Calu3 (cell line): ENCODE measurements at regions of chr2 and their contacts with region 1.

Region 1: GRCh38 chr2:201182650-201183364 is at the start of gene CASP10:
- DNase-seq: peak; percentile 54
- H3K4me3 Mint-ChIP-seq: peak within 1 kb of the TSS; percentile 91
- H3K27ac Mint-ChIP-seq: peak within 1 kb of the TSS; percentile 94
- H3K4me1 Mint-ChIP-seq: peaks cover 10% of the 10 kb centered on the region
- H3K27me3 Mint-ChIP-seq: no peaks in the 10 kb centered on the region
- CTCF ChIP-seq: peak; percentile 51
- total RNA-seq, gene CASP10: 21.4 and 22.5 TPM in 2 replicates

Region 2: DNA sequence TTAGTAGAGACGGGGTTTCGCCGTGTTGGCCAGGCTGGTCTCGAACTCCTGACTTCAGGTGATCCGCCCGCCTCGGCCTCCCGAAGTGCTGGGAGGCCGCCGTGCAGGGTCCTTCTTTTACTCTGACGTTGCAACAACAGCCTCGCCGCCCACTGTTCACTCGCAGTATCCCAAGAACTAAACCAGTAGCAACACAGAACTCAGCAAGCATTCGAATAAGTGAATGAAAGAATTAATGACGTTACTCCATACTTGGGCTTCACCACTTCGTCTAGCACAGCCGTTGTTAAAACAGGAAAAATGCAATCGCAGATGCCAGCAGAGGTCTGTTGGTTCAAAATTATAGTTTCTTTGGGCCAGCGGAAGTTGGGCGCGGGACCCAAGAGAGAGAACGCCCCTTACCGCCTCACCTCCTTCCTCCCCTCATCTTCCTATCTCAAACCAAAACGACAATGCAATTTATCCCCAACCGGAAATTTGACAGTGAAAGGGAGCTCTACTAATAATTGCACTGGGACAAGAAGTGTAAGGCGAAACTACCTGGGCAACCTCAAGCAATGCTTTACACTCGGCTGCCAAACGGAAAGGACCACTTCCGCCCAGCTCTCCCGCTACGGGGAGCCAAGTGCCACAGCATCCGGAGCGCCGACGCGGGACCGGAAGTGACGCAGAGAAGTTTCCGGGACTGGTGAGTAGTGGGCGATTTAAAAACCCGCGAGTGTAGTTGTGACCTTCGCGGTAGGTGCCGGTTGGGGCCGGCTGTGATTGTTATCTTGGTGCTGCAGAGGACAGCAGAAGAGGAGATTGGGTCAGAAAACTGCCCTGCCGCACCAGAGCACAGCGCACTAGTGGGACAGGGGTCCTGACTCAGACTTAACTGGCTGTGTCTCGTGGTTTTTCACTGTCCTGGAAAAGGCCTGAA is 293.8 kb before region 1 on chr2 and contains the starts of genes NIF3L1 and PPIL3:
- CTCF ChIA-PET with region 1: interaction called, 3 read pairs
- intact Hi-C with region 1: loop called (anchors 5 kb)
- DNase-seq: peak; percentile 97
- H3K4me3 Mint-ChIP-seq: peak within 1 kb of the TSS; percentile 96
- H3K27ac Mint-ChIP-seq: peak within 1 kb of the TSS; percentile 99
- H3K4me1 Mint-ChIP-seq: peaks cover 18% of the 10 kb centered on the region
- H3K27me3 Mint-ChIP-seq: no peaks in the 10 kb centered on the region
- CTCF ChIP-seq: no peak
- total RNA-seq, gene NIF3L1: 38.4 and 39.7 TPM in 2 replicates
- total RNA-seq, gene PPIL3: 28.0 and 31.5 TPM in 2 replicates

Region 3: GRCh38 chr2:200901459-200902072 is 281.2 kb before region 1 on chr2:
- CTCF ChIA-PET with region 1: interaction called, 13 read pairs
- intact Hi-C with region 1: no loop called
- DNase-seq: peak; percentile 75
- H3K4me3 Mint-ChIP-seq: no peak overlapping the region
- H3K27ac Mint-ChIP-seq: no peak overlapping the region
- H3K4me1 Mint-ChIP-seq: peaks cover 8% of the 10 kb centered on the region
- H3K27me3 Mint-ChIP-seq: no peaks in the 10 kb centered on the region
- CTCF ChIP-seq: peak; percentile 85

Region 4: DNA sequence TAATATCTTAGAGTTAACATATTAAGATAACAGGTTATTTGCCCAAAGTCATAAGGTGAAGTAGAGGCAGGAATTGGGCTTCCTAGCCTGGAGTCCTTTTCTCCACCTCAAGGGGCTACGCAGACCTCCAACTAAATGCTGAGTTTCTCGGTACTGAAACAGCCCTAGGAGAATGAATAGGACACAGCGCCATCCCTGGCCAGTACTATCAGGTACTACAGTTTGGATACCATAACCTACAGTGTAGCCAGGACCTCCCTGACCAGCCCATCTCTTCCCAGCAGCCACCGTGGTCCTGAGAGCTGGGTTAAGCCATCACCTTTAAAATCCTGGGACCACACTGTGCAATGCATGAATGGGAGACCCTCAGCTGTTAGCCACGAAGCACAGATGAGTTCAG is 93.2 kb after region 1 on chr2:
- CTCF ChIA-PET with region 1: no interaction called
- intact Hi-C with region 1: no loop called
- DNase-seq: no peak
- H3K4me3 Mint-ChIP-seq: no peak overlapping the region
- H3K27ac Mint-ChIP-seq: no peak overlapping the region
- H3K4me1 Mint-ChIP-seq: no peaks in the 10 kb centered on the region
- H3K27me3 Mint-ChIP-seq: no peaks in the 10 kb centered on the region
- CTCF ChIP-seq: no peak

Region 5: DNA sequence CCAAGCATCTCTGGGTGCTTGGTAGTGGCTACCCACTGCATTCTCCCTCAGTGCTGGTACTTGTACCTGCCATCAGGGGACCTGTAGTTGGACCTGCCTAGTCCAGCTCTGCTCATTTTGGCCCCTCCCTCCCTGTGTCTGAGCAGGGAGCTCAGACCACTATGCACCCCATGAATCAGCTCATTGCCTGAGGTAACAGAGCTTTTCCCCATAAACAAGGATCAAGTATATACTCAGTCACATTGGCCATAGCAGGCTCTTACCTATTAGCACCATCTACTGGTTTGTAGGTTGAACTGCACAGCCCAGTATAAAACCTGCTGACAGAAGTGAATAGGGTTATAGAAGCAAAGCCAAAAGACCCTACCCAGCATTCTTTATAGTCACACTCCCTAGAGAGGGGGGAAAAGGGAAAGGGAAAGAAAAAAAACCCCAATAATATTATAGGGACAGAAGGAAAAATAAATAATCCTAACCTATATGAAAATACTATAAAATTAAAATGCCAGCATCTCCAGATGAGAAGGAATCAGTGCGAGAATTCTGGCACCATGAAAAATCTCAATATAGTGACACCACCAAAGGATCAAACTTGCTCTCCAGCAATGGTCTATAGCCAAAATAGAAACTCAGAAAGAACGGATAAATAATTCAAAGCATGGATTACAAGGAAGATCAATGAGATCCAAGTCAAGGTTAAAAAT is 181.2 kb after region 1 on chr2:
- CTCF ChIA-PET with region 1: no interaction called
- intact Hi-C with region 1: loop called (anchors 2 kb)
- DNase-seq: peak; percentile 40
- H3K4me3 Mint-ChIP-seq: no peak overlapping the region
- H3K27ac Mint-ChIP-seq: no peak overlapping the region
- H3K4me1 Mint-ChIP-seq: peaks cover 6% of the 10 kb centered on the region
- H3K27me3 Mint-ChIP-seq: no peaks in the 10 kb centered on the region
- CTCF ChIP-seq: peak; percentile 80

Region 6: GRCh38 chr2:201532686-201533304 is 350.0 kb after region 1 on chr2:
- CTCF ChIA-PET with region 1: no interaction called
- intact Hi-C with region 1: no loop called
- DNase-seq: no peak
- H3K4me3 Mint-ChIP-seq: no peak overlapping the region
- H3K27ac Mint-ChIP-seq: no peak overlapping the region
- H3K4me1 Mint-ChIP-seq: no peaks in the 10 kb centered on the region
- H3K27me3 Mint-ChIP-seq: no peaks in the 10 kb centered on the region
- CTCF ChIP-seq: no peak

Region 7: DNA sequence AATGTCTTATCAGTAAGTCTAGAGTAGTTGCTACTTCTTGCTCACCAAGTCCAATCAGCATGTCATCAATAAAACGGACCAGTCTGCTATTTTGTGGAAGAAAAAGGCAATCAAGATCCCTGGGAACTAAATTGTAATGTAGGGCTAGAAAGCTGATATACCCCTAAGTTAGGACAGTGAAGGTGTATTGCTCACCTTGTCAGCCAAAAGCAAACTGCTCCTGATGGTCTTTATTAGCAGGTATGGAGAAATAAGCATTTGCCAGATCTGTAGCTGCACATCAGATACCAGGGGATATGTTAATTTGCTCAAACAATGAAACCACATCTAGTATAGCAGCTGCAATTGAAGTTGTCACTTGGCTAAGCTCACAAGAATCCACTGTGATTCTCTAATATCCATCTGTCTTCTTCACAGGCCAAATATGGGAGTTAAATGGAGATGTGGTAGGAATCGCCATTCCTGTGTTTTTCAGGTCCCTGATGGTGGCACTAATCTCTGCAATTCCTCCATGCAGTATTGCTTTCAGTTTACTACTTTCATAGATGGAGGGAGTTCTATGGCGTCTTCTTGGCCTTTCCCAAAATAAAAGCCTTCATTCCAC is 385.5 kb after region 1 on chr2:
- CTCF ChIA-PET with region 1: no interaction called
- intact Hi-C with region 1: no loop called
- DNase-seq: no peak
- H3K4me3 Mint-ChIP-seq: no peak overlapping the region
- H3K27ac Mint-ChIP-seq: no peak overlapping the region
- H3K4me1 Mint-ChIP-seq: no peaks in the 10 kb centered on the region
- H3K27me3 Mint-ChIP-seq: no peaks in the 10 kb centered on the region
- CTCF ChIP-seq: no peak